Left ventricle myocardium inferior (tissue), 1 donor: ENCODE measurements at regions of chr11 and their contacts with region 1.

Region 1: DNA sequence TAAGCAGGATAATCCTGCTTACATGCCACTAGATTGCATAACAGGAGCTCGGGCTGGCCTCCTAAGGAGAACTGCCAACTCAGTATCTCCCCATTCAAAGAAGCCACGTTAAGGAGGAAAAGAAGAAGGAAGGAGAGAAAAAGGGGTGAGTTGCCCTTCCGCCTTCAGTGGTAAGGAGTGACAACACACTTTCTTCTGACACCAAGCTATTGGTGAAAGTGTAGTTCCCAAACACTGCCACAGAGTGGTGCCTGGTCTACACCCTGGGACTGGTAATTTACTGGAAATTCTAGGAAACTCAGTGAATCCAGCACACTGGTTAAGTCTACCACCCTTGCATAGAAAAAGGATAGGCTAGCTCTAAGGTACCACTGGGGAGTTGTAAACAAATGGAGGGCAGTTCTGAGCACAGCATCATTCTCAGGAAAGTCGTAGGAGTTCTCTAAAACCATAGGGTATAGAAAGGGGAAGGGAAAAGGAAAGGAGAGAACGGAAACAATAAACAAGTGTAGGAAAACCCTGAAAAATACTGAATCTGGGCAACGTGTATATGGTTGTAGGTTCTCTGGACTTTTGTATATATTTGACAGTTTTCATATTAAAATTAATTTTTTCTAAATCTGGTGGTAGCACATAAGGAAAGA is 58.2 kb downstream of the RRAS2 start:
- DNase-seq: no peak
- H3K4me3 ChIP-seq: no peak overlapping the region
- H3K27ac ChIP-seq: no peak overlapping the region
- H3K4me1 ChIP-seq: peaks cover 36% of the 10 kb centered on the region
- H3K27me3 ChIP-seq: no peaks in the 10 kb centered on the region
- CTCF ChIP-seq: peak; percentile 82

Region 2: GRCh38 chr11:14358729-14359439 is 58.1 kb after region 1 on chr11 and contains the start of gene RRAS2:
- intact Hi-C with region 1: loop called (anchors 10 kb)
- DNase-seq: peak; percentile 80
- H3K4me3 ChIP-seq: peak within 1 kb of the TSS; percentile 82
- H3K27ac ChIP-seq: peak within 1 kb of the TSS; percentile 89
- H3K4me1 ChIP-seq: peaks cover 33% of the 10 kb centered on the region
- H3K27me3 ChIP-seq: no peaks in the 10 kb centered on the region
- CTCF ChIP-seq: peak; percentile 21
- total RNA-seq, gene RRAS2: 45.3 TPM

Region 3: DNA sequence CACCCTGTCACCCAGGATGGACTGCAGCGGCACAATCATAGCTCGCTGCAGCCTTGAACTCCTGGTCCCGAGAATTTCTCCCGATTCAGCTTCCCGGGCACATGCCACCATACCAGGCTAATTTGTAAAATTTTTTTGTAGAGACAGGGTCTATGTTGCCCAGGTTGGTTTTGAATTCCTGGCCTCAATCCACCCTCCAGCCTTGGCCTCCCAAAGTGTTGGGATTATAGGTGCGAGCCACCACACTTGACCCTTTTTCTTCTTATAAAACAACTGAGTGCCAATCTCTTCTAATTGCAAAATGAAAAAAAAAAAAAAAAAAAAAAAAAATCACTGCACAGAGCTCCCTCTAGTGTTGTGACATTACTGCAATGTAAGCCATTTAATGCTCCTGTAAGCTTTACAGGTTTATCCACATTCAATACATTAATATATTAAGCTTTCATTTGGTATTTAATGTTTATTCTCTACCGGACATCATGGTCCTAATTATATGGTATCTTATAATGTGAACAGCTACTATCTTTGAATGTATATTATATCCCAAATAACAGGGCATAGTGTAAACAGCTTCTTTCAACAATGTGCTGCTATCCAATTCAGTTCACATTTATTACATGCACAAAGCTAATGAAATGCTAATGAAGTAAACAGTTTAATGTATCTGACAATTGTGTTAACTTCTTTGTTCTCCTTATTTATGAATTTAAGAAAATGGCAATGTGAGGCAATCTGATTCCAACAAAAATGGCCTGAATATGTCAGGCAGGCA is 154.3 kb after region 1 on chr11:
- intact Hi-C with region 1: loop called (anchors 5 kb)
- DNase-seq: no peak
- H3K4me3 ChIP-seq: no peak overlapping the region
- H3K27ac ChIP-seq: peak overlapping the region; percentile 24
- H3K4me1 ChIP-seq: peaks cover 17% of the 10 kb centered on the region
- H3K27me3 ChIP-seq: no peaks in the 10 kb centered on the region
- CTCF ChIP-seq: peak; percentile 69

Region 4: DNA sequence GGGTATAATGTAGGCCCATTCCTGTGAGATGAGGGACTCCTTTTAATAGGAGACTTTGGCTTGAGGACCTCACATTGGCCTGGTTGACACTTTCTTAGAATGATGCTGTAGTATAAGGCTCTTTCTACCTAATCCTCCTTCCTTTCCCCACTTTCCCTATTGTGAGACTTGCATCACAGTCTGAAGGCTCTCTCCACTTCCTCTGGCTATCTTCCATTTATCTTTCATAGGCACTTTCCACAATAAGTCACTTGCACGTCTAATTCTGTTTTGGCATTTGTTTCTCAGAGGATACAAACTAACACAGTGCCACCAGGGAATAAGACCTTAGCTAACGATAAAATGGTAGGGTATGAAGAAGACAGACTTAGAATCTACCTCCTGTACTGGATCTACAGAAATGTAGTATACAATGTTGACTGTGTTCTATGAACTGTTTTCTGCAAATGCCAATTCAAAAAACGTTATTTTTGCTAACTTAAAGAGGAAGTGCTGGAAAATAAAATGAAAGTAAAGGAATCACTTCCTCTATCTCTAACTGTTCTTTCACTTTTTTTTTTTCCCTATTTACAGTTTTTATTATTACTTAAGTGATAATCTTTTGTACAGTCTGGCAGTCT is 324.9 kb after region 1 on chr11:
- intact Hi-C with region 1: no loop called
- DNase-seq: no peak
- H3K4me3 ChIP-seq: no peak overlapping the region
- H3K27ac ChIP-seq: no peak overlapping the region
- H3K4me1 ChIP-seq: no peaks in the 10 kb centered on the region
- H3K27me3 ChIP-seq: no peaks in the 10 kb centered on the region
- CTCF ChIP-seq: no peak